Right ventricle myocardium inferior (tissue), 1 donor: ENCODE measurements at regions of chr14 and their contacts with region 1.

Region 1: GRCh38 chr14:81219210-81219758 is 1.5 kb downstream of the GTF2A1 start:
- DNase-seq: peak; percentile 93
- ATAC-seq: peak; percentile 87

Region 2: GRCh38 chr14:80930836-80931389 is 288.4 kb before region 1 on chr14:
- intact Hi-C with region 1: no loop called
- DNase-seq: no peak
- ATAC-seq: no peak

Region 3: GRCh38 chr14:81170104-81170828 is 49.0 kb before region 1 on chr14:
- intact Hi-C with region 1: loop called (anchors 5 kb)
- DNase-seq: peak; percentile 98
- ATAC-seq: peak; percentile 100

Region 4: GRCh38 chr14:81200054-81200453 is 19.2 kb before region 1 on chr14:
- intact Hi-C with region 1: no loop called
- DNase-seq: no peak
- ATAC-seq: no peak